ENCODE measurements at regions of chr12 and their contacts with region 1.

Region 1: GRCh38 chr12:53295070-53295890 is at the start of gene PFDN5:
- DNase-seq: peak; percentile 73
- H3K4me3 ChIP-seq: peak within 1 kb of the TSS; percentile 99
- H3K27ac ChIP-seq: peak within 1 kb of the TSS; percentile 73
- H3K27me3 ChIP-seq: no peaks in the 10 kb centered on the region
- CTCF ChIP-seq: peak; percentile 11; the same call in 1 of the 2 replicates
- polyA plus RNA-seq, gene PFDN5: 970 and 991 TPM in 2 replicates

Region 2: GRCh38 chr12:53054112-53054833 is 241.0 kb before region 1 on chr12:
- CTCF ChIA-PET with region 1: no interaction called
- POLR2A ChIA-PET with region 1: no interaction called
- DNase-seq: no peak
- H3K4me3 ChIP-seq: peak overlapping the region; percentile 47
- H3K27ac ChIP-seq: peak overlapping the region; percentile 47
- H3K27me3 ChIP-seq: no peaks in the 10 kb centered on the region
- CTCF ChIP-seq: no peak

Region 3: GRCh38 chr12:53220801-53221202 is 74.5 kb before region 1 on chr12:
- CTCF ChIA-PET with region 1: interaction called, 183 read pairs
- POLR2A ChIA-PET with region 1: interaction called, 12 read pairs
- DNase-seq: peak; percentile 80
- H3K4me3 ChIP-seq: peak overlapping the region; percentile 80
- H3K27ac ChIP-seq: peak overlapping the region; percentile 95
- H3K27me3 ChIP-seq: no peaks in the 10 kb centered on the region
- CTCF ChIP-seq: no peak

Region 4: GRCh38 chr12:54021432-54022013 is 726.2 kb after region 1 on chr12:
- CTCF ChIA-PET with region 1: no interaction called
- POLR2A ChIA-PET with region 1: no interaction called
- DNase-seq: no peak
- H3K4me3 ChIP-seq: no peak overlapping the region
- H3K27ac ChIP-seq: no peak overlapping the region
- H3K27me3 ChIP-seq: peaks cover 96% of the 10 kb centered on the region
- CTCF ChIP-seq: no peak

Measured in AG04450 (cell line).